Naive thymus-derived CD4-positive, alpha-beta T cell (primary cell): ENCODE measurements at regions of chr2 and their contacts with region 1.

Region 1: DNA sequence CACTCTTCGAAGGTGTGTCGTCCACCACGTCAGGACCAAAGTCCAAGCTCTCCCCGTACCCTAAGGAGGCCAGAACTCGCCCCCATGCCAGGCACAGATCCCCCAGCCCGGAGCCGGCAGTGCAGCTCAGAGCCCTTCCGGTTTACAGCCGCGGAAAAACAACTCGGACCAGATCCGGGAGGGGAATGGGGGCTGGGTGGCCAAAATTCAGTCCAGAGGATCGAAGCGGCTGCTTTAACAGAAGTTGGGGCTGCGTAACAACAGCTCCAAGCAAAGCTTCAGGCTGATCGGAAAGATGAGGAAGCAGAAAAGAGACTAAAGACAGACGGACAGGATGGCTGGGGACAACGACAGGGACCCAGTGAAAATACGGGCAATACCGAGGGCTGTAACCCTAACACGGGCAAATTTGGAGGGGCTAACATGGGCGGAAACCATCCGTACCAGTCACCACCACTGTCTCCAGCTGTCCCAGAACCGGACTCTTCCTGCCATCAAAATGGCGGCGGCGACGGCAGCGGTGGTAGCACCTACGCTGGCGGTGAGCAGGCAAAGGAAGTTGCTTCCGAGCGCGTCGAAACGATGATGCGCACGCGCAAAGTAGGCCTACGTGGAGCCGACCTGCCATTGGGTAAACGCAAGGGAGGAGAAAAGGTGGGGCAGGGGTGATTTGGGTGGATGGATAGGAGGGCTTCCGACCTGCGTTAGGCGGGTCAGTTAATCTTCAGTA is at the start of gene MMADHC:
- DNase-seq: peak; percentile 83 to 93 (median 91)
- ATAC-seq: peak; percentile 98
- H3K4me3 ChIP-seq: peak within 1 kb of the TSS; percentile 97
- H3K4me3 Mint-ChIP-seq: peak within 1 kb of the TSS; percentile 95 to 99 (median 97)
- H3K27ac ChIP-seq: peak within 1 kb of the TSS; percentile 93
- H3K27ac Mint-ChIP-seq: peak within 1 kb of the TSS; percentile 95 to 100 (median 99)
- H3K4me1 ChIP-seq: peaks cover 23 to 39% of the 10 kb centered on the region in 2 donors
- H3K4me1 Mint-ChIP-seq: peaks cover 27 to 58% (median 50%) of the 10 kb centered on the region in 7 donors
- H3K27me3 ChIP-seq: no peaks in the 10 kb centered on the region
- H3K27me3 Mint-ChIP-seq: peaks cover 22 to 30% (median 30%) of the 10 kb centered on the region in 5 donors
- total RNA-seq, gene MMADHC: 53.3 to 93.4 (median 66.6) TPM

Region 2: GRCh38 chr2:149544692-149545091 is 42.7 kb before region 1 on chr2:
- CTCF ChIA-PET with region 1: no interaction called
- POLR2A ChIA-PET with region 1: no interaction called
- intact Hi-C with region 1: no loop called
- DNase-seq: peak in 5 of 9 donors; percentile 2 to 25 (median 16)
- ATAC-seq: peak; percentile 54
- H3K4me3 ChIP-seq: peak overlapping the region; percentile 49
- H3K4me3 Mint-ChIP-seq: peak overlapping the region; percentile 48 to 90 (median 77)
- H3K27ac ChIP-seq: no peak overlapping the region
- H3K27ac Mint-ChIP-seq: peak overlapping the region in 8 of 9 donors; percentile 8 to 88 (median 41)
- H3K4me1 ChIP-seq: no peaks in the 10 kb centered on the region
- H3K4me1 Mint-ChIP-seq: peaks cover 6 to 14% (median 11%) of the 10 kb centered on the region in 7 donors
- H3K27me3 ChIP-seq: no peaks in the 10 kb centered on the region
- H3K27me3 Mint-ChIP-seq: peaks cover 0 to 5% (median 0%) of the 10 kb centered on the region in 5 donors

Region 3: GRCh38 chr2:149573760-149574159 is 13.6 kb before region 1 on chr2:
- CTCF ChIA-PET with region 1: no interaction called
- POLR2A ChIA-PET with region 1: interaction called, 5 read pairs
- intact Hi-C with region 1: loop called (anchors 1 to 2 kb)
- DNase-seq: no peak
- ATAC-seq: no peak
- H3K4me3 ChIP-seq: no peak overlapping the region
- H3K4me3 Mint-ChIP-seq: no peak overlapping the region
- H3K27ac ChIP-seq: no peak overlapping the region
- H3K27ac Mint-ChIP-seq: no peak overlapping the region
- H3K4me1 ChIP-seq: peaks cover 5 to 7% of the 10 kb centered on the region in 2 donors
- H3K4me1 Mint-ChIP-seq: peaks cover 7 to 44% (median 25%) of the 10 kb centered on the region in 7 donors
- H3K27me3 ChIP-seq: no peaks in the 10 kb centered on the region
- H3K27me3 Mint-ChIP-seq: no peaks in the 10 kb centered on the region

Region 4: DNA sequence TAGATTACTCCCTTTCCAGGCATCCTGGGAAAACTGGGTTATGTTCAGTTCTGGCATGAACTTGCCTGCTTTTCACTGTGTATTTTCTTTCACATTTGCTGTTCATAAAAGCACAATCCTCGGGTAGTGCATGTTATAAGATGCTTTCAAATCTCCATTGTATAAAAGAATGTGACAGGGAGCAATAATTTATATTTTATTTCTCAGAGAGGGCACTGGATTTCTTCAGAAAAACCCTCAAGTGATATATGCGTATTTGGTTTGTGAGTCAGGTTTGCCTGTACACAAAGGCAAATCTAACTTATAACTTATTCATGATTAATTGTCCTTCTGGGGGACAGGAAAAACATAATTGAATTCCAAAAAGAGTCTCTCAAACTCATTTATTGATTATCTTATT is 440.9 kb after region 1 on chr2:
- CTCF ChIA-PET with region 1: no interaction called
- POLR2A ChIA-PET with region 1: no interaction called
- intact Hi-C with region 1: loop called in 1 of 2 experiments (anchors 5 kb)
- DNase-seq: no peak
- ATAC-seq: no peak
- H3K4me3 ChIP-seq: no peak overlapping the region
- H3K4me3 Mint-ChIP-seq: no peak overlapping the region
- H3K27ac ChIP-seq: no peak overlapping the region
- H3K27ac Mint-ChIP-seq: no peak overlapping the region
- H3K4me1 ChIP-seq: no peaks in the 10 kb centered on the region
- H3K4me1 Mint-ChIP-seq: no peaks in the 10 kb centered on the region
- H3K27me3 ChIP-seq: no peaks in the 10 kb centered on the region
- H3K27me3 Mint-ChIP-seq: peaks cover 0 to 5% (median 0%) of the 10 kb centered on the region in 5 donors

Region 5: GRCh38 chr2:151337643-151338042 is 1750.3 kb after region 1 on chr2:
- CTCF ChIA-PET with region 1: no interaction called
- POLR2A ChIA-PET with region 1: no interaction called
- intact Hi-C with region 1: no loop called
- DNase-seq: no peak
- ATAC-seq: peak; percentile 46
- H3K4me3 ChIP-seq: no peak overlapping the region
- H3K4me3 Mint-ChIP-seq: no peak overlapping the region
- H3K27ac ChIP-seq: no peak overlapping the region
- H3K27ac Mint-ChIP-seq: no peak overlapping the region
- H3K4me1 ChIP-seq: no peaks in the 10 kb centered on the region
- H3K4me1 Mint-ChIP-seq: peaks cover 0 to 10% (median 9%) of the 10 kb centered on the region in 7 donors
- H3K27me3 ChIP-seq: no peaks in the 10 kb centered on the region
- H3K27me3 Mint-ChIP-seq: peaks cover 0 to 24% (median 15%) of the 10 kb centered on the region in 5 donors